GM12878 (cell line): ENCODE measurements at regions of chr2 and their contacts with region 1.

Region 1: GRCh38 chr2:119476301-119477021 is 44.8 kb downstream of the TMEM37 start:
- DNase-seq: no peak
- ATAC-seq: peak; percentile 94
- H3K4me3 ChIP-seq: no peak overlapping the region
- H3K27ac ChIP-seq: no peak overlapping the region
- H3K4me1 ChIP-seq: no peaks in the 10 kb centered on the region
- H3K27me3 ChIP-seq: no peaks in the 10 kb centered on the region
- CTCF ChIP-seq: peak; percentile 88 to 97 (median 91)
- EP300 ChIP-seq: no peak
- POLR2A ChIP-seq: no peak
- RAD21 ChIP-seq: peak; percentile 95

Region 2: DNA sequence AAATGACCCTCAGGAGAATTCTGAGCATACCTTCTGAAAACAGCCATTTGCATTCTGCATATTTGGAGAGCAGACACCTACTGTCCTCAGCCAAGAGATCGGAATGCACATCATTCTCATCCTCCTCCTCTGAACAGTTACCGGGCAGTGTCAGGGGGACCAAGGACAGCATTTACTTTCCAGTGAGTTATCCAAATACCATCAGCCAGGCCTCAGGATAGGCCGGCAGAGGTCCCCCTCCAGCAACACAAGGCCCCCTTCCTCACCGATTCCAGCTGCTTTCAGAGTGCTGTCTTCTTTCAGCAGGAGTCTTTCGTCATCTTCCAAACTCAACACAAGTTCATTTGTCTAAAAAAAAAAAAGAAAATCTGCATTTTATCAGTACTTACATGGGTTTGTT is 165.1 kb before region 1 on chr2:
- CTCF ChIA-PET with region 1: interaction called, 3 read pairs
- POLR2A ChIA-PET with region 1: no interaction called
- RAD21 ChIA-PET with region 1: interaction called, 7 read pairs
- SMC1A ChIA-PET with region 1: no interaction called
- in situ Hi-C with region 1: no loop called
- intact Hi-C with region 1: loop called (anchors 5 kb)
- DNase-seq: no peak
- ATAC-seq: peak; percentile 31; the same call in 2 of the 3 replicates
- H3K4me3 ChIP-seq: no peak overlapping the region
- H3K27ac ChIP-seq: no peak overlapping the region; the same call in 1 of the 2 replicates
- H3K4me1 ChIP-seq: peaks cover 27% of the 10 kb centered on the region
- H3K27me3 ChIP-seq: no peaks in the 10 kb centered on the region
- CTCF ChIP-seq: no peak
- EP300 ChIP-seq: no peak
- POLR2A ChIP-seq: no peak
- RAD21 ChIP-seq: peak; percentile 62

Region 3: GRCh38 chr2:119414894-119415293 is 61.6 kb before region 1 on chr2:
- CTCF ChIA-PET with region 1: interaction called, 187 read pairs
- POLR2A ChIA-PET with region 1: no interaction called
- RAD21 ChIA-PET with region 1: interaction called, 75 read pairs
- SMC1A ChIA-PET with region 1: interaction called, 62 read pairs
- in situ Hi-C with region 1: no loop called
- intact Hi-C with region 1: no loop called
- DNase-seq: no peak
- ATAC-seq: no peak
- H3K4me3 ChIP-seq: no peak overlapping the region
- H3K27ac ChIP-seq: no peak overlapping the region
- H3K4me1 ChIP-seq: no peaks in the 10 kb centered on the region
- H3K27me3 ChIP-seq: no peaks in the 10 kb centered on the region
- CTCF ChIP-seq: no peak
- EP300 ChIP-seq: no peak
- POLR2A ChIP-seq: no peak
- RAD21 ChIP-seq: no peak

Region 4: GRCh38 chr2:119451336-119452050 is 25.0 kb before region 1 on chr2:
- CTCF ChIA-PET with region 1: interaction called, 13 read pairs
- POLR2A ChIA-PET with region 1: no interaction called
- RAD21 ChIA-PET with region 1: no interaction called
- SMC1A ChIA-PET with region 1: interaction called, 4 read pairs
- in situ Hi-C with region 1: no loop called
- intact Hi-C with region 1: no loop called
- DNase-seq: no peak
- ATAC-seq: no peak
- H3K4me3 ChIP-seq: no peak overlapping the region
- H3K27ac ChIP-seq: no peak overlapping the region
- H3K4me1 ChIP-seq: no peaks in the 10 kb centered on the region
- H3K27me3 ChIP-seq: peaks cover 0 to 3% of the 10 kb centered on the region in 2 experiments; a peak in 3 of 4 replicates
- CTCF ChIP-seq: no peak
- EP300 ChIP-seq: no peak
- POLR2A ChIP-seq: no peak
- RAD21 ChIP-seq: no peak

Region 5: GRCh38 chr2:119494163-119494790 is 17.8 kb after region 1 on chr2:
- CTCF ChIA-PET with region 1: interaction called, 11 read pairs
- POLR2A ChIA-PET with region 1: no interaction called
- RAD21 ChIA-PET with region 1: no interaction called
- SMC1A ChIA-PET with region 1: interaction called, 10 read pairs
- in situ Hi-C with region 1: no loop called
- intact Hi-C with region 1: no loop called
- DNase-seq: no peak
- ATAC-seq: no peak
- H3K4me3 ChIP-seq: no peak overlapping the region
- H3K27ac ChIP-seq: no peak overlapping the region
- H3K4me1 ChIP-seq: no peaks in the 10 kb centered on the region
- H3K27me3 ChIP-seq: no peaks in the 10 kb centered on the region; a peak in 2 of 4 replicates
- CTCF ChIP-seq: no peak
- EP300 ChIP-seq: no peak
- POLR2A ChIP-seq: no peak
- RAD21 ChIP-seq: no peak